ENCODE measurements at regions of chr21 and their contacts with region 1.

Region 1: DNA sequence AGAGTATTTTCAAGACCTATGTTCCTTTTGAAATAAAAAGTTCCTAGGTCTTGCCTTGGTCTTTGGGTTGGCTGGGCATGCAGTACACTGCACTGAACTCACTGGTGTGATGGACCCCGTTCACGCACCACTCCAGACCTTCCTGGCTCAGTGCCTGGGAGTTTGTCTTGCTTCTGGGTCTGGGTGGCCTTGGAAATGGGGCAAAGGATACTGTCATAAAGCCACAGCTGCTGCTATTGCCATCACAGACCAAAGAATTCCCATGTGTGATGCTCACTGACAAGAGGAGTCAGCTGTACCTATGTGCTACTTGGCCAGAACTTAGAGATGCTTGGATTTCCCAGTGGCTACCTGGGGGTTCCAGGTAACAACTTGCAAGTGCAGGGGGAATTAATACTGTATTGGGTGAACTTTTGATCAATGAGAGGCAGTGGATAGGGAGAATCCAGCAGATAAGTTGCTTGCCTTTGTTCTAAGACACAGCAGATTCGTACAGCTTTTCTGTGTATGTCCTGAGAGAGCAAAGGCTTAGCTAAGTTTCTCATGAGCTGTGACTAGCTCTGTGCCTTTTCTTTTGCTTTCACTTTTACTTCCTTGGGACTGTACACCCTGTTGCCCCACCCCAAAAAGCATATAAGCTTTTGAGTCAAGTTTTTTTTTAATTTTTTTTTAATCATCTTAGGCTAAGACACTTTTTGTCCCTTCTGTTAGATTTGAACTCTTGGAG is 115.3 kb downstream of the RUNX1 start:
- DNase-seq: peak; percentile 40
- ATAC-seq: peak; percentile 85
- H3K4me3 Mint-ChIP-seq: peak overlapping the region; percentile 68
- H3K27ac Mint-ChIP-seq: peak overlapping the region; percentile 96
- H3K4me1 Mint-ChIP-seq: peaks cover 84% of the 10 kb centered on the region
- H3K27me3 Mint-ChIP-seq: no peaks in the 10 kb centered on the region

Region 2: DNA sequence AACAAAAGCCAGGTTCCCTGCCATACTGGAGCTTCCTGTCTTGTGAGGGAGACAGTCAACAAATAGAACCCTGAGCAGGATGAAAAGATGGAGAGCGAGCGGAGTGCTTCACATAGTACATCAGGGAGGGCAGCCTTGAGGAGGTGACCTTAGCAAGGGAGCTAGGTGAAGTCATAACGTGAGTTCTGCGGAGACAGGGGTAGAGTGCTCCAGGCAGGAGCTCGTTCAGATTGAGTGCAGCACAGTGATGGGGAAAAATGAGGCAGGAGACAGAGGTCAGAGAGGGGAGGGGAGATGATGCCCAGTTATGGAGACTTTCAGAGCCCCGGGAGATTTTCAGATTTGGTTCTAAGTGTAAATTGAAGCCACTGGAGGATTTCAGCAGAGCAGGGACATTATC is 280.2 kb before region 1 on chr21:
- CTCF ChIA-PET with region 1: no interaction called
- POLR2A ChIA-PET with region 1: no interaction called
- intact Hi-C with region 1: no loop called
- DNase-seq: no peak
- ATAC-seq: no peak
- H3K4me3 Mint-ChIP-seq: no peak overlapping the region
- H3K27ac Mint-ChIP-seq: no peak overlapping the region
- H3K4me1 Mint-ChIP-seq: peaks cover 2% of the 10 kb centered on the region
- H3K27me3 Mint-ChIP-seq: peaks cover 38% of the 10 kb centered on the region

Region 3: DNA sequence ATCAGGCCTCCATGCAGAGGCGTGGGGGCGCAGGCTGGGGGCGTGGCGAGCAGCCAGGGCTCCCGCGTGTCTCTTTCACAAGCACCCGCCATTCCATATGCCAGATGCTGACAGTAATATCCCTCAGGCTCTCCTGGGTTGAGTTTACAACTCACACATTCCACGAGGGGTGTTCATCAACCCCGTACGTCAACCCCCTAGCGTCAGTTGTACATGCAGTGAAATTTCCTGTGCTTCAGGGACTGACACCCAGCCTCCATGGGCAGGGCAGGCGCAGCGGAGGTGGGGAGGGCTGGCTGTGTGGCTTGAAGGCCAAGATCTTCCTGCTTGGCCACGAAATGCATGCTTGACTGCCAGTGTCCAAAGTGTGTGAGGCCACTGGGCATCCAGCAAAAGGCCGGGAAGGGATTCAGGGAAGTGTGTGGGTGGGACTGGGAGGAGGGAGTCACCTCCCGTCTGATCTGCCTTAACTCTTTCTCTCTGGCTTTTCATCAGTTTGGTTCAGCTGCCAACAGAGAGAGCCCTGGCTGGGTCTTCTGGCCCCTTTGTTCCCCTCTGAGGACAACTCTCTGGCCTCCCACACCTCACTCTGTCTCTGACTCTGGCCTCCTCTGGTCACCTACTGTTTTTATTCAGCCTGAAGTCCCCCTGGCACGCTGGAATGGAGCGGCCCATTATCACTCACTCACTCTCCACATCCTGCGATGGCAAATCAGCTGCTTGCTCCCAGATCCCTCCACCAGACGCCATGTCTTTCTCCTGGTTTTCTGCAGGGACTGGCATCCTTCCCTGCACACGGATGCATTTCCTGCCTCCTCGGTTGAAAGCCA is 231.2 kb before region 1 on chr21:
- CTCF ChIA-PET with region 1: no interaction called
- POLR2A ChIA-PET with region 1: no interaction called
- intact Hi-C with region 1: no loop called
- DNase-seq: no peak
- ATAC-seq: no peak
- H3K4me3 Mint-ChIP-seq: no peak overlapping the region
- H3K27ac Mint-ChIP-seq: no peak overlapping the region
- H3K4me1 Mint-ChIP-seq: peaks cover 14% of the 10 kb centered on the region
- H3K27me3 Mint-ChIP-seq: peaks cover 19% of the 10 kb centered on the region

Region 4: GRCh38 chr21:34952701-34953100 is 18.9 kb after region 1 on chr21:
- CTCF ChIA-PET with region 1: interaction called, 33 read pairs
- POLR2A ChIA-PET with region 1: interaction called, 7 read pairs
- intact Hi-C with region 1: no loop called
- DNase-seq: no peak
- ATAC-seq: peak; percentile 30
- H3K4me3 Mint-ChIP-seq: no peak overlapping the region
- H3K27ac Mint-ChIP-seq: peak overlapping the region; percentile 62
- H3K4me1 Mint-ChIP-seq: peaks cover 86% of the 10 kb centered on the region
- H3K27me3 Mint-ChIP-seq: no peaks in the 10 kb centered on the region

Region 5: DNA sequence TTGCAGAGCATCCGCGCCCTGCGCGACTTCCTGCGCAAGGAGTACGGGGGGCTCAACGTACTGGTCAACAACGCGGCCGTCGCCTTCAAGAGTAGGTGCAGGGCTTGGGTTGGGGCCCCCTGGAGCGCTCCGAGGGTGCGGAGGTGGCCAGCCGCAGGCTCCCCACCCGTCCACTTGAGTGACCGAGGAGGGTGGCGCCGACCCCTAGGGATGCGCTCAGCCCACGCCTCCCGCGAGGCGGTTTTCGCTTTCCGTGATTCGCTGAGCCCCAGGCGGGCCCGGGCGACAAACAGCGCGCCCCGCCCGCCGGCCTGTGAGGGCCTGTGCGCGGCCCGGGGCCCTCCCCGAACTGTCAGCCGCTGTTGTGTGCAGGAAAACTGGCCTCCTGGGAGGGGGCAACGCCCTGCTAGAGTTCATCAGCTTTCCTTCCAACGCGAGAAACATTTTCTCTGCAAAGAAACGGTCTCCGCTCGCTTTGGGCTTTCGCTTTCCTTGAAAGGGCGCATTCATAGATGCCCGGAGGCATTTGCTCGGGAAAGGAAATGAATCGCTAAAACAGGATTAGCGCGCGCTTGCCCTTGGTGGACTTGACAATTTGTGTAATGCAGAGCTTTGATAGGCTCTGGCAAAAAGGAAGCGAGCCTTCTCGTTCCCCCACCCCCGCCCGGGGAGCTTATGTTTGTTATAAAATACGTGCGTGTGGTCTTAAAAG is 1201.8 kb after region 1 on chr21:
- CTCF ChIA-PET with region 1: no interaction called
- POLR2A ChIA-PET with region 1: no interaction called
- intact Hi-C with region 1: loop called in 1 of 2 experiments (anchors 10 kb)
- DNase-seq: peak; percentile 78
- ATAC-seq: peak; percentile 73
- H3K4me3 Mint-ChIP-seq: peak overlapping the region; percentile 87
- H3K27ac Mint-ChIP-seq: peak overlapping the region; percentile 78
- H3K4me1 Mint-ChIP-seq: peaks cover 22% of the 10 kb centered on the region
- H3K27me3 Mint-ChIP-seq: no peaks in the 10 kb centered on the region